ENCODE measurements at regions of chr2 and their contacts with region 1.

Region 1: GRCh38 chr2:224650815-224651439 is 65.2 kb downstream of the CCDC195 start:
- DNase-seq: peak; percentile 70
- ATAC-seq: peak; percentile 67
- H3K4me3 ChIP-seq: no peak overlapping the region
- H3K4me3 Mint-ChIP-seq: no peak overlapping the region
- H3K27ac ChIP-seq: no peak overlapping the region
- H3K27ac Mint-ChIP-seq: no peak overlapping the region
- H3K4me1 ChIP-seq: no peaks in the 10 kb centered on the region
- H3K4me1 Mint-ChIP-seq: peaks cover 8% of the 10 kb centered on the region
- H3K27me3 ChIP-seq: no peaks in the 10 kb centered on the region
- H3K27me3 Mint-ChIP-seq: no peaks in the 10 kb centered on the region
- CTCF ChIP-seq: peak; percentile 89

Region 2: GRCh38 chr2:223993621-223994232 is 657.2 kb before region 1 on chr2:
- CTCF ChIA-PET with region 1: interaction called, 4 read pairs
- POLR2A ChIA-PET with region 1: no interaction called
- intact Hi-C with region 1: loop called (anchors 2 kb)
- DNase-seq: peak; percentile 78
- ATAC-seq: peak; percentile 43
- H3K4me3 ChIP-seq: no peak overlapping the region
- H3K4me3 Mint-ChIP-seq: no peak overlapping the region
- H3K27ac ChIP-seq: no peak overlapping the region
- H3K27ac Mint-ChIP-seq: no peak overlapping the region
- H3K4me1 ChIP-seq: no peaks in the 10 kb centered on the region
- H3K4me1 Mint-ChIP-seq: no peaks in the 10 kb centered on the region
- H3K27me3 ChIP-seq: no peaks in the 10 kb centered on the region
- H3K27me3 Mint-ChIP-seq: no peaks in the 10 kb centered on the region
- CTCF ChIP-seq: peak; percentile 85

Region 3: DNA sequence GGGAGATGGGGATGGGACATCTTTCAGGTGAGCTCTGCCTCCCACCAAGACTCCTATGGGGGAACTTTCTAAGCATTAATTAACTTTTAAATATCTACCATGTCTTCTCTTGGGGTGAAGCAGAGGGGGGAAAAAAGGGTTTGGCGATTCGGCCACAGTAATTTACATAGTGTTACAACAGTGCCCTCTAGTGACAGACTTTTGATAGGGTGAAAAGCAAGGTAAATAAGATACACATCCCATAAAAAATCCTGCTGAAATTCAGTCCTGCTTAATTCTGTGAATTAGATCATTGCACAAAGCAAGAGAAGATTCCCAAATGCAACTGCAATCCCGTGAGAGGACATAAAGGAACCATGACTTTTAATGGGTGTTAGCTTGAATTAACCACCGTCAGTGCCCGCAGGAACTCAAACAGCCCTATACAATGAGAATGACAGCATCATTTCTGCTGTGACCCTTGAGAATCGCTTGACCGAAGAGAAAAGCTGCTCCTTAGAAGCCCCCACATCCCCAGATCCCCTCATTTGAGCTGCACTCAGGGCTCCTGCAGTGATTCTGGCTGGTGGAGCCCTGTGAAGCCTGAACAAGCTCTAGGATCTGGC is 281.8 kb before region 1 on chr2:
- CTCF ChIA-PET with region 1: interaction called, 90 read pairs
- POLR2A ChIA-PET with region 1: no interaction called
- intact Hi-C with region 1: no loop called
- DNase-seq: peak; percentile 58
- ATAC-seq: no peak
- H3K4me3 ChIP-seq: no peak overlapping the region
- H3K4me3 Mint-ChIP-seq: no peak overlapping the region
- H3K27ac ChIP-seq: no peak overlapping the region
- H3K27ac Mint-ChIP-seq: no peak overlapping the region
- H3K4me1 ChIP-seq: no peaks in the 10 kb centered on the region
- H3K4me1 Mint-ChIP-seq: no peaks in the 10 kb centered on the region
- H3K27me3 ChIP-seq: no peaks in the 10 kb centered on the region
- H3K27me3 Mint-ChIP-seq: no peaks in the 10 kb centered on the region
- CTCF ChIP-seq: peak; percentile 81

Region 4: GRCh38 chr2:224492531-224492930 is 158.4 kb before region 1 on chr2:
- CTCF ChIA-PET with region 1: interaction called, 4 read pairs
- POLR2A ChIA-PET with region 1: no interaction called
- intact Hi-C with region 1: loop called (anchors 10 kb)
- DNase-seq: no peak
- ATAC-seq: no peak
- H3K4me3 ChIP-seq: no peak overlapping the region
- H3K4me3 Mint-ChIP-seq: no peak overlapping the region
- H3K27ac ChIP-seq: no peak overlapping the region
- H3K27ac Mint-ChIP-seq: peak overlapping the region; percentile 33
- H3K4me1 ChIP-seq: peaks cover 10 to 14% of the 10 kb centered on the region in 2 donors
- H3K4me1 Mint-ChIP-seq: peaks cover 44% of the 10 kb centered on the region
- H3K27me3 ChIP-seq: no peaks in the 10 kb centered on the region
- H3K27me3 Mint-ChIP-seq: no peaks in the 10 kb centered on the region
- CTCF ChIP-seq: no peak

Region 5: GRCh38 chr2:224585205-224586088 is 65.5 kb before region 1 on chr2 and contains the start of gene CUL3:
- CTCF ChIA-PET with region 1: interaction called, 14 read pairs
- POLR2A ChIA-PET with region 1: no interaction called
- intact Hi-C with region 1: loop called (anchors 2 kb)
- DNase-seq: peak; percentile 99
- ATAC-seq: peak; percentile 87
- H3K4me3 ChIP-seq: peak within 1 kb of the TSS; percentile 79 to 95 (median 84)
- H3K4me3 Mint-ChIP-seq: peak within 1 kb of the TSS; percentile 98
- H3K27ac ChIP-seq: peak within 1 kb of the TSS; percentile 83
- H3K27ac Mint-ChIP-seq: peak within 1 kb of the TSS; percentile 96
- H3K4me1 ChIP-seq: peaks cover 31 to 40% of the 10 kb centered on the region in 2 donors
- H3K4me1 Mint-ChIP-seq: peaks cover 45% of the 10 kb centered on the region
- H3K27me3 ChIP-seq: no peaks in the 10 kb centered on the region
- H3K27me3 Mint-ChIP-seq: no peaks in the 10 kb centered on the region
- CTCF ChIP-seq: no peak
- total RNA-seq, gene CUL3: 138 and 142 TPM in 2 replicates

Region 6: DNA sequence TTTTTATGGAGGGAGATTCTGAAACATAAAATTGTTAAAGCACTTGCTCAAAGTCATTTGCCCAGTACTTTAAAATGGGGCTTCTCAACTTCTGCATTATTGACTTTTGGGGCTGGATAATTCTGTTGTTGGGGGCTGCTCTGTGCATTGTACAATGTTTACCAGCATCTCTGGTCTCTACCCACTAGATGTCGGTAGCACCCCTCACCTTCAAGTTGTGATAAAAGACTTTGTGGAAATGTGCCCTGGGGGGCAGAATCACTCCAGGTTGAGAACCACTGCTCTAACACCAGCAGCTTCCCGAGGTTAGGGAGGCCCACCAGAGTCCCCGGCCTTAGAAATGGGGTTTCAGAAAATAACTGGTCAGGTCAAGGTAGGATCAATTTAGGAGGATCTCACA is 39.0 kb before region 1 on chr2:
- CTCF ChIA-PET with region 1: interaction called, 67 read pairs
- POLR2A ChIA-PET with region 1: no interaction called
- intact Hi-C with region 1: loop called (anchors 1 kb)
- DNase-seq: no peak
- ATAC-seq: peak; percentile 51
- H3K4me3 ChIP-seq: no peak overlapping the region
- H3K4me3 Mint-ChIP-seq: no peak overlapping the region
- H3K27ac ChIP-seq: no peak overlapping the region
- H3K27ac Mint-ChIP-seq: no peak overlapping the region
- H3K4me1 ChIP-seq: no peaks in the 10 kb centered on the region
- H3K4me1 Mint-ChIP-seq: no peaks in the 10 kb centered on the region
- H3K27me3 ChIP-seq: no peaks in the 10 kb centered on the region
- H3K27me3 Mint-ChIP-seq: no peaks in the 10 kb centered on the region
- CTCF ChIP-seq: peak; percentile 6

Region 7: DNA sequence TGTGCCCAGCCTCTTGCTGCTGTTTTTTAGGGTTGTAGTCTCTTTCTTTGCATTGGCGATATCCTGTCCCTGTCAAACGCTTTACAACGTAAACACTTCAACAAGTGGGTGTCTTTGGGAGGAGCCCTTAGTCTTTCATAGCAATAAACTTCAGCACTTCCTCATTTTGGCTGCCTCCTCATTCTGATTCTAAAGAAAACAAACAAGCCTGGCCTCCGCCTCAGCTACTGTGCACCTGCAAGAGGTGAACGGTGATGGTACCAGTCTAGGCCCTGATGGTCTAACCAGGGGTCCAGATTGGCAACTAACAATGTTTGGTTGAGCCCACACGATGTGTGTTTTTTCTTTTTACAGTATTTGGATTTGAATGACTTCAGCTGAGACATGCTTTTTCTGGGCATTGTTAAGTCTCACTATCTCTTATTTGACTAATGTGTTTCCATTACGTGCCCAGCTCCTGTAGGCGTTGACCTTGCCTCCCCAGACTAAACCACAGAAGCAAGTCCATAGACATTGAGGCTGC is 12.6 kb before region 1 on chr2:
- CTCF ChIA-PET with region 1: interaction called, 102 read pairs
- POLR2A ChIA-PET with region 1: no interaction called
- intact Hi-C with region 1: loop called (anchors 1 kb)
- DNase-seq: peak; percentile 75
- ATAC-seq: peak; percentile 89
- H3K4me3 ChIP-seq: peak overlapping the region in 3 of 5 experiments; percentile 1 to 38 (median 20)
- H3K4me3 Mint-ChIP-seq: peak overlapping the region; percentile 80
- H3K27ac ChIP-seq: peak overlapping the region; percentile 75 to 79
- H3K27ac Mint-ChIP-seq: peak overlapping the region; percentile 100
- H3K4me1 ChIP-seq: peaks cover 14 to 25% of the 10 kb centered on the region in 2 donors
- H3K4me1 Mint-ChIP-seq: peaks cover 16% of the 10 kb centered on the region
- H3K27me3 ChIP-seq: no peaks in the 10 kb centered on the region
- H3K27me3 Mint-ChIP-seq: no peaks in the 10 kb centered on the region
- CTCF ChIP-seq: no peak

Region 8: DNA sequence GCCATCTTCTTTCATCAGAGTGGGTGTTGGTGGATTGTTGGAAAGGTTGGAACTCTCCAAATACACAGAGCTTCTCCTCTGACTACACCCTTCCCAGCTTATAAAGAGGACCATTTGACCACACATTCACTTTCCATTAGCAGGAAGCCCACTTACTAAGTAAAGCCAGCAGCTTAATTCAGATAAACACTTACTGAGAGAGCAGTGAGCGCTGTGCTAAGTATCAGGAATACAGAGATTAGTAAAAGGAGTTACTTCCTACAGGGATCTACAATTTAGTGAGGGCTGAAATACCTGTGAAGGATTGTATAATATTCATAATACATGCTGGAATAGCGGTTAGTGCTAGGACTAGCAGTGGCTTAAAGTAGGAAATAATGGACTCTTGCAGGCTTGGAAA is 1091.6 kb after region 1 on chr2:
- CTCF ChIA-PET with region 1: no interaction called
- POLR2A ChIA-PET with region 1: no interaction called
- intact Hi-C with region 1: no loop called
- DNase-seq: no peak
- ATAC-seq: no peak
- H3K4me3 ChIP-seq: no peak overlapping the region
- H3K4me3 Mint-ChIP-seq: no peak overlapping the region
- H3K27ac ChIP-seq: no peak overlapping the region
- H3K27ac Mint-ChIP-seq: no peak overlapping the region
- H3K4me1 ChIP-seq: no peaks in the 10 kb centered on the region
- H3K4me1 Mint-ChIP-seq: no peaks in the 10 kb centered on the region
- H3K27me3 ChIP-seq: no peaks in the 10 kb centered on the region
- H3K27me3 Mint-ChIP-seq: peaks cover 4% of the 10 kb centered on the region
- CTCF ChIP-seq: no peak

Measured in B cell (primary cell).